Activated CD8-positive, alpha-beta T cell treated with anti-CD3 and anti-CD28 coated beads, Interleukin-2, amount 10 ng/mL, durations not matched to agents 7 days and 5 days (primary cell): ENCODE measurements at regions of chr13 and their contacts with region 1.

Region 1: GRCh38 chr13:29508130-29508875 is 87.2 kb downstream of the SLC7A1 start:
- DNase-seq: peak; percentile 78
- ATAC-seq: peak; percentile 79
- H3K4me3 Mint-ChIP-seq: no peak overlapping the region
- H3K27ac Mint-ChIP-seq: no peak overlapping the region
- H3K4me1 Mint-ChIP-seq: peaks cover 6% of the 10 kb centered on the region
- H3K27me3 Mint-ChIP-seq: no peaks in the 10 kb centered on the region

Region 2: DNA sequence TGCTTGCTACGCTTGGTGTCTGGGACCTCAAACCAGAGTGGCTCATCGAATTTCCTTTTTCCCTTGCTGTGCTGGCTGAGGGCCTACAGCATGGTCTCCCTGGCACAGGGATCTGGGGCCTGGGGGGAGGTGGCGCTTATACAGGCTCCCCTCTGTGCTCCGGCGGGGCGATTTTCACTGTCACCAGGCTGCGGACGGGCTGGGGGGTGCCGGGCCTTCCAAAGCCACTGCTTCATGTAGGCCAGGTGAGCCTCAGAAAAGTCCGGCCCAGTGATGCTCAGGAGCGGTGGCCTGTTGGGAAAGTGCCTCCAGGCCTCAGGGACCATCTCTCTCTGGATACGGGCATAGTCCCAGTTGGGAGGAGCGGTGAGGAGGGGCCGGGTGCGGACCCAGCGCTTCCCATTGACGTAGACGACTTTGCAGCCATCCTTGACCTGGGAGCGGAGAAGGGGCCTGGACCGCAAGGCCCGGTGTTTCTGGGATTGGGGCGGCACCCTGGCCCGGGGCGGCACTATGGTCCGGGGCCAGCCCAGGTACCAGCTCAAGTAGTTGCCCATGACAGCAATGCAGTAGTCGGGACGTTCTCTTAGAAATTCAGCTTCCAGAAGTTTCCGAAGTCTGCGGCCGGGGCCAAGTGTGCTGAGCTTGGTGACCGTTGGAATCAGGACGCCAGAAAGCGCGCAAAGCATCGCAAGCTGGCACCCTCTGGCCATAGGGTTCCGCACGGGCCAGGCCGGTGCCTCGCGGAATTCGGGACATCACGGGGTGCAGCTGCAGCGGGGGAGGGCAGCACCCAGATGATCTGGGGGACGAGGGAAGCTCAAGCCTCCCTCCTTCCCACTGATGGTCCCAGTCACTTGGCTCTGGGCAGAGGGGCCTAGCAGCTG is 168.7 kb before region 1 on chr13:
- CTCF ChIA-PET with region 1: no interaction called
- POLR2A ChIA-PET with region 1: no interaction called
- DNase-seq: no peak
- ATAC-seq: no peak
- H3K4me3 Mint-ChIP-seq: no peak overlapping the region
- H3K27ac Mint-ChIP-seq: no peak overlapping the region
- H3K4me1 Mint-ChIP-seq: no peaks in the 10 kb centered on the region
- H3K27me3 Mint-ChIP-seq: no peaks in the 10 kb centered on the region

Region 3: DNA sequence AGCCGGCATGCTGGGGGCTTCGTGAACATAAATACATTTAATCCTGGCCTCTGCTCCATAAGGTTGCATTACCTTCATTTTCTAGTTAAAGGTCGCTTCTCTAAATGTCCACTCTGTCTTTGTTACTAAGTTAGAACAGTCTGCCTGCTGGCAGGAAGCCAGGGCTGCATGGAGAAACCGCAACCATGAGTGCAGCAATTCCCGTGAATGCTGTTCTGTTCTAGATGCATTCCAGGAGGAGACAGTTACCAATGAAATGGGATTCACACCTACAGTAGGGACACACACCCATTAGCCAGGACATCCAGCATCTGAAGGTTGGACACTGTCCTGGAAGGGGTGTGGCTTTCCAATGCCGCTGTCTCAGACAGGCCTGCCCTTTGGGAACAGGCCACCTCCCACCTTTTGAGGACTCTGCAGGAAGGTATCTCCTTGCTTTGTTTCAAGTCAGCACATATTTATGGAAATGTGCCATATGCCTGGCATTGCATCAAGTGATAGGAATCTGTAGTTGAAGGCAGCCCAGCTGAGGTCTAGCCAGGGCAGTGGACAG is 42.5 kb before region 1 on chr13:
- CTCF ChIA-PET with region 1: no interaction called
- POLR2A ChIA-PET with region 1: no interaction called
- DNase-seq: no peak
- ATAC-seq: no peak
- H3K4me3 Mint-ChIP-seq: no peak overlapping the region
- H3K27ac Mint-ChIP-seq: no peak overlapping the region
- H3K4me1 Mint-ChIP-seq: peaks cover 4% of the 10 kb centered on the region
- H3K27me3 Mint-ChIP-seq: peaks cover 4% of the 10 kb centered on the region

Region 4: DNA sequence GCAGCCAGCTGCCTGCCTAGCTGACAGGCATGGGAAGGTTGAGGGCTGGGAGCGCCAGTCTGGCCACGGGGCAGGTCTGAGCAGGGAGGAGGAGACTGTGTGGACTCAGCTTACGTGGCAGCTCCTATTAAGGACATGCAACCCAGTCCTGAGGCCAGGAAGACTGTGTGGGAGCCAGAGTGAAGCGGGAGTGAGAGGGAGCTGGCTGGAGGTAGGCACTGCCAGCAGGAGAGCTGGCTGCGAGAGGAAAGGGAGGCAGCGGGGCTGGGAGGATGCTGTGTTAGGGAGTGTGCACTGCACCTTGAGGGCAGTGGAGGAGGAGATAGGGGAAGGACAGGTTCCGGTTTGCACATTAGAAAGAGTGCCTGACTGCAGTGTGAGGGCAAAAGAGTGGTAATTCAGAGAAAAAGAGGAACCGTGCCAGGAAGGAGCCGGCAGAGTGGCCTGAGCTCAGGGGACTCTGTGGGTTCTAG is 12.0 kb before region 1 on chr13:
- CTCF ChIA-PET with region 1: interaction called, 34 read pairs
- POLR2A ChIA-PET with region 1: no interaction called
- DNase-seq: no peak
- ATAC-seq: peak; percentile 54
- H3K4me3 Mint-ChIP-seq: peak overlapping the region; percentile 4
- H3K27ac Mint-ChIP-seq: no peak overlapping the region
- H3K4me1 Mint-ChIP-seq: peaks cover 11% of the 10 kb centered on the region
- H3K27me3 Mint-ChIP-seq: peaks cover 23% of the 10 kb centered on the region

Region 5: GRCh38 chr13:29519916-29520315 is 11.6 kb after region 1 on chr13:
- CTCF ChIA-PET with region 1: interaction called, 14 read pairs
- POLR2A ChIA-PET with region 1: no interaction called
- DNase-seq: no peak
- ATAC-seq: no peak
- H3K4me3 Mint-ChIP-seq: no peak overlapping the region
- H3K27ac Mint-ChIP-seq: no peak overlapping the region
- H3K4me1 Mint-ChIP-seq: no peaks in the 10 kb centered on the region
- H3K27me3 Mint-ChIP-seq: no peaks in the 10 kb centered on the region

Region 6: DNA sequence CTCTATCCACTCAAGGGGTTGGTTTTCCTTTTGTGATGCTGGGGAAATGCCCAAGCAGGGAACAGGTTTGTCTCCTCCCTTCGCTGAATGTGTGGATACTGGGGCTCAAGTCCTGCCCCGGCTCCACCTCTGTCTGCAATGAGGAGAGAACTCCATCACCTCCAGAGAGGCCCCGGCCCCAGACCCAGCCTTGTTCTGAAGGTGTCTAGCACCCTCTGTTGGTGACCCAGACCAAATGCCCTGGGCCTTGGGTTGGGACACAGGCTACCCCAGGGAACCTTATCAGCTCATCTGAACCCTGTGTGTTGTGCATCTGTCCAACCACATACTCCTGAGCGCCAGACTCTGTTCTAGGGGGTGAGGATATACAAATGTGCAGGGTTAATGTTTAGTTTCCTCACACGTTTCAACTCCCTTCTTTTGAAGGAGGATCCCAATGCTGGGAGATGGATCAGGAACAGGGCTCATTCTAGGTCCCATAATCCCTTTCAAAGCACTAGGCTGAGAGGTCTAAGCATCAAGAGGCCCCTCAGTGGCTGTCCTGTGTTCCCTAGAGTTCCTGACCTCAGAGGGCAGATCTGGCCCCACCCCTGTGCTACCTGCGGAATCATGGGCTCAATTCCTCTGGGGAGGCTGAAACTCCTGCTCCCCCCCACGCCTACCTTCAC is 199.7 kb after region 1 on chr13:
- CTCF ChIA-PET with region 1: interaction called, 28 read pairs
- POLR2A ChIA-PET with region 1: no interaction called
- DNase-seq: peak; percentile 46
- ATAC-seq: peak; percentile 78
- H3K4me3 Mint-ChIP-seq: no peak overlapping the region
- H3K27ac Mint-ChIP-seq: no peak overlapping the region
- H3K4me1 Mint-ChIP-seq: no peaks in the 10 kb centered on the region
- H3K27me3 Mint-ChIP-seq: peaks cover 17% of the 10 kb centered on the region

Region 7: DNA sequence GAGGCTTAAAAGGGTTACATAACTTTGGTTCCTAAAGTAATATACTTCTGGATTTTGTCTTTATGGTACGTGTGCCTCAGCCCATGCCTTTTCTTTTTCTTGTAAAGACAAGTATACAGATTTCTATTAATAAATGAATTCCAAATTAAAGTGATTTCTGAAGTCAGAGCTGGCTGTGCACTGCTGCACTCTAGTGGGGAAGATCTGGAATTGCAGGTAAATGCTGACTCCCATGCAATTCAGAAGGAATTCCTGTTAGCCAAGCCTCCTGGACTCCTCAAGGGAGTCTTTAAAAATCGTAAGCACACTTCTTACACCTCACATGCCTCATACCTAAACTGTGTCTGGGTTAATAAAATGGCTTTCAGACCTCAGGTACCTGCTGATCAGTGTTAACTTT is 205.5 kb after region 1 on chr13:
- CTCF ChIA-PET with region 1: interaction called, 28 read pairs
- POLR2A ChIA-PET with region 1: interaction called, 4 read pairs
- DNase-seq: no peak
- ATAC-seq: no peak
- H3K4me3 Mint-ChIP-seq: no peak overlapping the region
- H3K27ac Mint-ChIP-seq: no peak overlapping the region
- H3K4me1 Mint-ChIP-seq: no peaks in the 10 kb centered on the region
- H3K27me3 Mint-ChIP-seq: peaks cover 11% of the 10 kb centered on the region

Region 8: GRCh38 chr13:30000370-30000765 is 492.1 kb after region 1 on chr13:
- CTCF ChIA-PET with region 1: no interaction called
- POLR2A ChIA-PET with region 1: no interaction called
- DNase-seq: no peak
- ATAC-seq: no peak
- H3K4me3 Mint-ChIP-seq: no peak overlapping the region
- H3K27ac Mint-ChIP-seq: no peak overlapping the region
- H3K4me1 Mint-ChIP-seq: peaks cover 22% of the 10 kb centered on the region
- H3K27me3 Mint-ChIP-seq: peaks cover 3% of the 10 kb centered on the region